ENCODE measurements at regions of chr12 and their contacts with region 1.

Region 1: GRCh38 chr12:111396726-111397445 is 8.8 kb upstream of the SH2B3 start:
- DNase-seq: no peak
- ATAC-seq: peak; percentile 86
- H3K4me3 ChIP-seq: peak overlapping the region; percentile 7; the same call in 1 of the 2 replicates
- H3K27ac ChIP-seq: peak overlapping the region; percentile 61
- H3K4me1 ChIP-seq: peaks cover 38% of the 10 kb centered on the region
- H3K27me3 ChIP-seq: no peaks in the 10 kb centered on the region
- CTCF ChIP-seq: peak; percentile 97 to 99 (median 99)
- EP300 ChIP-seq: no peak
- POLR2A ChIP-seq: no peak
- RAD21 ChIP-seq: peak; percentile 92

Region 2: DNA sequence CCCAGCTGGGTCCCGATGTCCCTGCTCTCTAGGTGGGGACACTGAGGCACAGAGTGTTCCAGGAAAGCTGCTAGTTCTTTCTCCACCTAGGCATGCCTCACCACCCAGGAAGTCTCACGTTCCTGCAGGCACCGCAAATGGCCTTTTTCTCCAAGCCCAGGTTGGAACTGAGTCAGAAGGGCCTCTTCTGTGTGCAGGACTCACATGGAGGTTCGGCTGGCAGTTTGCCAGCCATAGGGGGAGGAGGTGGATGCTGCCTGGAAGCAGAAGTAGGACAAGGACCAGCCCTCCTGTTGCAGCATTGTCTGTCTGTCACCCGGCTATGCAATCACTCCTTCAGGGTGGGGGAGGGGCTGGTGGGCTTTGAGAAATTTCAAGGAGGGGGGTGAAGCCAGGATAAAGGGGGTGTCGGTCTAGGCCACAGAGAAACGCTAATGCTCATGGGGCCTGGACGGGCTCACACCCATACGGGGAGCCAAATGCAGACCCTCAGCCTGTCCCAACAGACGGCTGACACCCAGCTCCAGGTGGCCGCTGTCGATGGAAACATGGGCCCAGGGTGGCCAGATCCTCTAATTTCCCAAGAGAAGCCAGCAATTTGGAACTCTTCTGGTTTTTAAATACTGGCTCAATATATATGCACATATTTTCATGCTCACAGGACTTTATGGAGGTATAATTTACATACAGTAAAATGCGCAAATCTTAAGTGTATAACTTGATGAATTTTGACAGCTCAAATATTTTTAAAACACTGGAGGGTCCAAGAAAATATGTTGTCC is 148.5 kb before region 1 on chr12:
- CTCF ChIA-PET with region 1: no interaction called
- POLR2A ChIA-PET with region 1: no interaction called
- RAD21 ChIA-PET with region 1: no interaction called
- SMC1A ChIA-PET with region 1: no interaction called
- in situ Hi-C with region 1: no loop called
- intact Hi-C with region 1: no loop called
- DNase-seq: no peak
- ATAC-seq: no peak
- H3K4me3 ChIP-seq: no peak overlapping the region
- H3K27ac ChIP-seq: no peak overlapping the region
- H3K4me1 ChIP-seq: no peaks in the 10 kb centered on the region
- H3K27me3 ChIP-seq: no peaks in the 10 kb centered on the region; a peak in 2 of 4 replicates
- CTCF ChIP-seq: no peak
- EP300 ChIP-seq: no peak
- POLR2A ChIP-seq: no peak
- RAD21 ChIP-seq: no peak

Region 3: GRCh38 chr12:111412007-111412829 is 15.3 kb after region 1 on chr12:
- CTCF ChIA-PET with region 1: interaction called, 29 read pairs
- POLR2A ChIA-PET with region 1: interaction called, 13 read pairs
- RAD21 ChIA-PET with region 1: interaction called, 22 read pairs
- SMC1A ChIA-PET with region 1: interaction called, 15 read pairs
- in situ Hi-C with region 1: no loop called
- intact Hi-C with region 1: no loop called
- DNase-seq: no peak
- ATAC-seq: peak; percentile 43
- H3K4me3 ChIP-seq: peak overlapping the region; percentile 58; the same call in 1 of the 2 replicates
- H3K27ac ChIP-seq: peak overlapping the region; percentile 49
- H3K4me1 ChIP-seq: peaks cover 49% of the 10 kb centered on the region
- H3K27me3 ChIP-seq: no peaks in the 10 kb centered on the region
- CTCF ChIP-seq: no peak
- EP300 ChIP-seq: no peak
- POLR2A ChIP-seq: no peak
- RAD21 ChIP-seq: no peak

Region 4: DNA sequence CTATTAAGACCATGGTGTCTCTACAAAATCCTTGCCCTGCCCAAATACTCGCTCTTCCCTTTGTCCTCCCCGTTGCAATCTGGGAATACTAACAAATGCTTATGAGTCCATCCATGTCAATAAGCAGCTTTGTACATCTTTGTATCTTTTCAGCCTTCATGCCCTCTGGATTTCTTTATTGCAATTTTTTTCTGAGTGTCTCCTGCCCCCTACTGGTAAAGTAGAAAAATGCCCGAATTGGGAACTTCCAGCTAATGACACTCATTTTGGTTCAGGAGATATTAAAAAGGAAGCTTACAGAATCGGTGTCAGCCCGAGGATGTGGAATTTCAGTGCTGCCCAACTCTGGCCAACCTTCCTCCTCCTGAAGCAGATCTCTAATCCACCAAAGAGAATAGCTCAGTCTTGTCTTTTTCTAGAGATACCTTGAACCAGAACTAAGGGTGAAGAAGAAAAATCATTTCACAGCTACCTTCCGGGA is 54.8 kb after region 1 on chr12:
- CTCF ChIA-PET with region 1: interaction called, 1,117 read pairs
- POLR2A ChIA-PET with region 1: interaction called, 23 read pairs
- RAD21 ChIA-PET with region 1: interaction called, 804 read pairs
- SMC1A ChIA-PET with region 1: interaction called, 605 read pairs
- in situ Hi-C with region 1: loop called (anchors 5 kb)
- intact Hi-C with region 1: loop called (anchors 1 kb)
- DNase-seq: no peak
- ATAC-seq: peak; percentile 73
- H3K4me3 ChIP-seq: no peak overlapping the region
- H3K27ac ChIP-seq: no peak overlapping the region
- H3K4me1 ChIP-seq: peaks cover 37% of the 10 kb centered on the region
- H3K27me3 ChIP-seq: no peaks in the 10 kb centered on the region
- CTCF ChIP-seq: peak; percentile 61 to 81 (median 73)
- EP300 ChIP-seq: no peak
- POLR2A ChIP-seq: 0 out of 2 replicates have a peak, but pooled peaks have one; percentile 25
- RAD21 ChIP-seq: peak; percentile 92

Region 5: DNA sequence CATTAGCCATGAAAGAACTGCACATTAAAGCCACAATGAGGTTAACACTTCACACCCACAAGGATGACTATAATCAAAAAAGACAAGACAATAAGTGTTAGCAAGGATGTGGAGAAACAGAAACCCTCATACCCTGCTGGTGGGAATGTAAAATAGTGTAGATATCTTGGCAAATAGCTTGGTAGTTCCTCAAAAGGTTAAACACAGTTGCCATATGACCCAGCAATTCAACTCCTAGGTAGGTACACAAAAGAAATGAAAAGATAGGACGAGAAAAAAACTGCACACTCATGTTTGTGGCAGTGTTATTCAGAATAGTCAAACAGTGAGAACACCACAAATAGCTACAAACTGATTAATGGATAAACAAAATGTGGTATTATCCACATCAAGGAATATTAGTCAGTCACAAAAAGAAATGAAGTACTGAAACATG is 108.7 kb after region 1 on chr12:
- CTCF ChIA-PET with region 1: interaction called, 10 read pairs
- POLR2A ChIA-PET with region 1: no interaction called
- RAD21 ChIA-PET with region 1: interaction called, 3 read pairs
- SMC1A ChIA-PET with region 1: no interaction called
- in situ Hi-C with region 1: no loop called
- intact Hi-C with region 1: no loop called
- DNase-seq: peak; percentile 9
- ATAC-seq: peak; percentile 69
- H3K4me3 ChIP-seq: no peak overlapping the region
- H3K27ac ChIP-seq: no peak overlapping the region
- H3K4me1 ChIP-seq: no peaks in the 10 kb centered on the region
- H3K27me3 ChIP-seq: no peaks in the 10 kb centered on the region
- CTCF ChIP-seq: no peak
- EP300 ChIP-seq: peak in 1 of 2 experiments; percentile 22; a peak in 1 of 4 replicates
- POLR2A ChIP-seq: no peak
- RAD21 ChIP-seq: no peak

Region 6: DNA sequence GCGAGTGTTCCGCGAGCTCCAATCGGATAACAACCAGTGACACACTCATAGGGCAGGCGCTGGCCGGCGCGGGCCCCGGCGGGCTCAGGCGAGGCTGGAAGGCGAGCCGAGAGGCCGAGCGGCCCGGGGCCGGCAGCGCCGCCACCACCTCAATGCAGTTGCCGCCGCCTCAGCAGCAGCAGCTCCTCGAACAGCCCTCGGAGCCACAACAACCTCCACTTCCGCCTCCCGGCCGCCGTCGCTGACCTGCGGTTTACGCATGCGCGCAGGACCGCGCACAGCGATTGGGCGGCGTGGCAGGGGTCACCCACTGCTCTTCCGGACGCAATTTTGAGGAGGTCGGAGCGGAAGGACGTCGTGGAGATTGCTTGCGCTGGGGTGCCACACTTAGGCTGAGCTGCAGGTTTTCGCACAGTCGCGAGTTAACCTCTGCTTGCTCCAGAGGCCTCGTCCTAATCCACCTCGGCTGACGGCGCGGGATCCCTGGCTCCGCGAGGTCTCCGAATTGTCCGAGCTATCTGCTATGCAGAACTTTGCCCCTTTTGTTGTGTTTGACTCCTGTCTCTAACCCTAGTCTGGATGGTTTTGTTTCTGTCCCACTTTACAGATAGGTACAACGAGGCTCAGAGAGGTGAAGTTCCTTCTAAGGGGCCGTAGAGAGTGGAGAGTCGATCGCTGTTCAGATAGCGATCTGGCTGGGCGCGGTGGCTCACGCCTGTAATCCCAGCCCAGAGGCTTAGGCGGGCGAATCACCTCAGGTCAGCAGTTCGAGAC is 289.0 kb after region 1 on chr12 and contains the starts of genes ACAD10 and BRAP:
- CTCF ChIA-PET with region 1: interaction called, 4 read pairs
- POLR2A ChIA-PET with region 1: no interaction called
- RAD21 ChIA-PET with region 1: interaction called, 3 read pairs
- SMC1A ChIA-PET with region 1: interaction called, 5 read pairs
- in situ Hi-C with region 1: no loop called
- intact Hi-C with region 1: loop called (anchors 10 kb)
- DNase-seq: peak; percentile 89
- ATAC-seq: peak; percentile 98
- H3K4me3 ChIP-seq: peak within 1 kb of the TSS; percentile 99
- H3K27ac ChIP-seq: peak within 1 kb of the TSS; percentile 63
- H3K4me1 ChIP-seq: peaks cover 8% of the 10 kb centered on the region
- H3K27me3 ChIP-seq: no peaks in the 10 kb centered on the region
- CTCF ChIP-seq: peak in 2 of 3 experiments; percentile 8 to 13; a peak in 1 of 6 replicates
- EP300 ChIP-seq: no peak
- POLR2A ChIP-seq: peak; percentile 99
- RAD21 ChIP-seq: no peak
- polyA plus RNA-seq, gene ACAD10: 2.9 to 3.4 TPM
- polyA plus RNA-seq, gene BRAP: 2.3 to 3.4 TPM

Region 7: GRCh38 chr12:111699962-111700361 is 303.1 kb after region 1 on chr12:
- CTCF ChIA-PET with region 1: no interaction called
- POLR2A ChIA-PET with region 1: no interaction called
- RAD21 ChIA-PET with region 1: no interaction called
- SMC1A ChIA-PET with region 1: no interaction called
- in situ Hi-C with region 1: no loop called
- intact Hi-C with region 1: no loop called
- DNase-seq: no peak
- ATAC-seq: no peak
- H3K4me3 ChIP-seq: no peak overlapping the region
- H3K27ac ChIP-seq: no peak overlapping the region
- H3K4me1 ChIP-seq: no peaks in the 10 kb centered on the region
- H3K27me3 ChIP-seq: no peaks in the 10 kb centered on the region
- CTCF ChIP-seq: no peak
- EP300 ChIP-seq: no peak
- POLR2A ChIP-seq: no peak
- RAD21 ChIP-seq: no peak

Measured in GM12878 (cell line).